GM18951 (cell line): ENCODE measurements at regions of chr3 and their contacts with region 1.

Region 1: GRCh38 chr3:32177702-32178198 is 60.7 kb upstream of the CMTM8 start:
- POLR2A ChIP-seq: no peak

Region 2: GRCh38 chr3:32216172-32216783 is 38.5 kb after region 1 on chr3:
- in situ Hi-C with region 1: no loop called
- POLR2A ChIP-seq: no peak

Region 3: DNA sequence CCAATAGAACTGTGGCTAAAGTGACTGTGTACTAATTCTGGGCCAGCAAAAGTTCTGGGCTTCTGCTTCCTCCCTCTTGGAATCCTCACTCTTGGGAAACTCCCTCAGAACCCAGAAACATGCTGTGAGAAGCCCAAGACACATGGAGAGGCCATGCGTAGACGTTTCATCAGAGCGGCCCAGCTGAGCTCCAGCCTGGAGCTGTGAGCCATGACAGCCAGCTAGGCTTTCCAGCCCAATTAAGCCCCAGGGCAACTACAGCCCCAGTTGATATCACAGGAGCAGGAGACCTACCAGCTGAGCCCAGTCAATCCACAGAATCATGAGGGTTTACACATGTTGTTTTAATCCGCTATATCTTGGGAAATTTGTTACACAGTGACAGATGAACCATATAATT is 463.6 kb after region 1 on chr3:
- in situ Hi-C with region 1: loop called (anchors 25 kb)
- POLR2A ChIP-seq: no peak